ENCODE measurements at regions of chr4 and their contacts with region 1.

Region 1: DNA sequence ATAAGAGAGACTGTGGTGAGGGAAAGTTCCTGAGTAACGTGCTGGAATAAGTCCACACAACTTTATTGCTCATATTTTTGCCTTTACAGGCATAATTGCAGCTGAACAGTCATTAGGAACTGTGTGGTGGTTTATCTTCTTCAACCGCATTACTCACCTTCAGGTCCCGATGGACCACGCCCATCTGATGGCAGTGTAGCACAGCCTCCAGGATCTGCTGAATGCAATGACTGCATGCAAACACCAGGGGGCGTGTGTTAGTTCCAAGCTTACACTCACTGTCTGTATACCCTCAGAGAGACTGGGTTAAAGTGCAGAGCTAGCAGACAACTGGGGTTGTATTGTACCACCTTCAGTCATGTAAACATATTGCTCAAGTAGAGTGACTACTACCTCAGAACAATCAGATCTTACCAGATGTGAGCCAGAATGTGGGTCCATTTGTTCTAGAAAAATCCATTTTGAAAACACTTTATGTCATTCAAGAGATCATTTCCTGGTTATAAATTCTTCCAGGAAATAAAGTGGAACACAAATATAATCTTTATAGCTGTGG is 214.0 kb downstream of the CAMK2D start:
- DNase-seq: peak; percentile 97
- ATAC-seq: peak; percentile 98
- H3K4me3 ChIP-seq: no peak overlapping the region
- H3K27ac ChIP-seq: peak overlapping the region; percentile 18; the same call in 1 of the 2 replicates
- H3K4me1 ChIP-seq: peaks cover 9% of the 10 kb centered on the region
- H3K27me3 ChIP-seq: no peaks in the 10 kb centered on the region
- CTCF ChIP-seq: peak; percentile 96 to 99 (median 98); a peak in 5 of 6 replicates
- EP300 ChIP-seq: peak in 1 of 2 experiments; percentile 94; a peak in 2 of 4 replicates
- POLR2A ChIP-seq: no peak
- RAD21 ChIP-seq: peak; percentile 91

Region 2: GRCh38 chr4:113394730-113395530 is 152.6 kb before region 1 on chr4:
- CTCF ChIA-PET with region 1: no interaction called
- POLR2A ChIA-PET with region 1: no interaction called
- RAD21 ChIA-PET with region 1: no interaction called
- SMC1A ChIA-PET with region 1: interaction called, 6 read pairs
- in situ Hi-C with region 1: no loop called
- intact Hi-C with region 1: loop called (anchors 2 kb)
- DNase-seq: peak; percentile 66
- ATAC-seq: peak; percentile 99
- H3K4me3 ChIP-seq: no peak overlapping the region
- H3K27ac ChIP-seq: no peak overlapping the region
- H3K4me1 ChIP-seq: no peaks in the 10 kb centered on the region
- H3K27me3 ChIP-seq: no peaks in the 10 kb centered on the region
- CTCF ChIP-seq: peak; percentile 62 to 94 (median 70); a peak in 5 of 6 replicates
- EP300 ChIP-seq: no peak
- POLR2A ChIP-seq: no peak
- RAD21 ChIP-seq: peak; percentile 98

Region 3: DNA sequence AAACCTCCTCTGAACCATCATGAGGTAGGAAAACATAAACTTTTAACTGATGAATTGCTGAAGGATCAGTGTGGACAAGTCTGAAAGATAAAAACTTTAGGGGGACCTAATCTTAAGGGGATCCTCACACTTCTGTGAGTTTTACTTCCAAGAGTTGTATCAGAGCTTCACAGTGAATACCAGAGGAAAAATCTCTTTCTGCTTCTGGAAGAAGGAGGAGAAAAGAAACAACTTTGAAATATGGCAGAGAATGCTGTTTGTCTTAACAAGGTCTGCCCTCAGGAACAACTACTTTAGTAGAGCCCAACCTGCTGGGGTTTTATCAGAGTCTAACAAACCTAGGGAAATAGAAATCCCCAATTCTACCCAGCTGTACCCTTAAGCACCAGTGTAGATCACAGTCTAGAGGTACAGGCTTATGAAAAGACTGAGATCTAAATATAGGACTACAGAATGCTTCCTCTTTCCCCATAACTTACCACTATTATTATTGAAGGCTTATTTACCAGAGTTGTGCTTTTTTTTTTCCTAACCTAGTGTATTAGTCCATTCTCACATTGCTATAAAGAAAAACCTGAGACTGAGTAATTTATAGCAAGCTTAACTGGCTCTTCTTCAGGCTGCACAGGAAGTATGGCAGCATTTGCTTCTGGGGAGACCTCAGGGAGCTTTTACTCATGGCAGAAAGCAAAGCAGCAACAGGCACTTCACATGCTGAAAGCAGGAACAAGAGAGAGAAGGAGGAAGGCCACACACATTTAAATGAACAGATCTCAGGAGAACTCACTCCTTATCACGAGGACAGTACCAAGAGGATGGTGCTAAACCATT is 46.0 kb after region 1 on chr4:
- CTCF ChIA-PET with region 1: interaction called, 9 read pairs
- POLR2A ChIA-PET with region 1: no interaction called
- RAD21 ChIA-PET with region 1: interaction called, 3 read pairs
- SMC1A ChIA-PET with region 1: interaction called, 17 read pairs
- in situ Hi-C with region 1: no loop called
- intact Hi-C with region 1: no loop called
- DNase-seq: peak; percentile 8
- ATAC-seq: peak; percentile 84
- H3K4me3 ChIP-seq: no peak overlapping the region
- H3K27ac ChIP-seq: no peak overlapping the region; the same call in 1 of the 2 replicates
- H3K4me1 ChIP-seq: peaks cover 10% of the 10 kb centered on the region; the same call in 1 of the 2 replicates
- H3K27me3 ChIP-seq: no peaks in the 10 kb centered on the region
- CTCF ChIP-seq: no peak
- EP300 ChIP-seq: no peak
- POLR2A ChIP-seq: no peak
- RAD21 ChIP-seq: no peak

Region 4: DNA sequence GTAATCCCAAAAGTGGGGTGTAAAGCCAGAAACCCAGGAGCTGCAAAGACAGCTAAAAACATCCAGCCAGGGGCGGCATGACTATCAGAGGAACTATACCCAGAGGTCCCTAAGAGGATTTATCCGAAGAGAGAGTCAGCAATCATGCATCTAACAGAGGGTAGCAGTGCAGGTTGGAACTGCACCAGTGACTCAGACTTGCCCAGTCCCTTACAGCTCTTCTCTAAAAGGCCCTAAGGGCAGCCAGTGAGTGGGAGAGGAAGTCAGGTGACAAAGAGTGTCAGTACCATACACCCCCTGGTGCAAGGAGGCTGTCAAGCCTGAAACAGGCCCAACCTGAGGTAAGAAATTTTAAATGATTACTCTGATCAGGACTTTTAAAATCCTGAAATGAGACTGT is 125.9 kb after region 1 on chr4:
- CTCF ChIA-PET with region 1: interaction called, 13 read pairs
- POLR2A ChIA-PET with region 1: no interaction called
- RAD21 ChIA-PET with region 1: interaction called, 10 read pairs
- SMC1A ChIA-PET with region 1: interaction called, 17 read pairs
- in situ Hi-C with region 1: no loop called
- intact Hi-C with region 1: no loop called
- DNase-seq: no peak
- ATAC-seq: peak; percentile 98
- H3K4me3 ChIP-seq: no peak overlapping the region
- H3K27ac ChIP-seq: no peak overlapping the region
- H3K4me1 ChIP-seq: no peaks in the 10 kb centered on the region
- H3K27me3 ChIP-seq: no peaks in the 10 kb centered on the region
- CTCF ChIP-seq: peak in 2 of 3 experiments; percentile 6 to 15; a peak in 2 of 6 replicates
- EP300 ChIP-seq: no peak
- POLR2A ChIP-seq: no peak
- RAD21 ChIP-seq: 0 out of 2 replicates have a peak, but pooled peaks have one; percentile 24

Region 5: DNA sequence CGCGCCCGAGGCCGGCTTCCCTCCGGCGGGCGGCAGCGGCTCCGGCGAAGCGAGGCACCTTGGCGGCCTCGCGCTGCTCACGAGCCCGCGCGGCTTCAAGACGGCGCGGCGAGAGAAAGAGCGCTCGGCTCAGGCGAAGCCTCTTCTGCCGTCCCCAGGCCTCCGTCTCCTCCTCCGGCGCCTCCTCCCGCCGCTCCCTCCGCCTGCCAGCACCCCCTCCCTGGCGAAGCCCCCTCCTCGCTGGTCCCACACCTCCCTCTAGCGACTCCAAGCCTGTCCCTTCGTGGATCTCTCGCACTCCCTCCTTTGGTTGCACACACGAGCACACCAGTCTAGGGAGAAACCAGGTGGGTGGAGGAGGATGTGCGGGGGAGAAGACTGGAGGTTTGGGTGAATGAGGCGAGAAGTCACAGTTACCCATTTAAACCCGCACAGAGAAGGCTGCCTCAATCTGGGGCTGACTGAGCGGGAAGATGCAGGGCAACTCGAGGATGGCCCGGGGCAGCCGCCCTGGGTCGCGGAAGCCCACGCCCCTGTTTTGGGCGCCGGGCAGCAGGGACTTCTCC is 214.1 kb after region 1 on chr4 and contains the start of gene CAMK2D:
- CTCF ChIA-PET with region 1: interaction called, 26 read pairs
- POLR2A ChIA-PET with region 1: no interaction called
- RAD21 ChIA-PET with region 1: interaction called, 54 read pairs
- SMC1A ChIA-PET with region 1: interaction called, 60 read pairs
- in situ Hi-C with region 1: no loop called
- intact Hi-C with region 1: loop called (anchors 1 kb)
- DNase-seq: peak; percentile 81
- ATAC-seq: peak; percentile 56
- H3K4me3 ChIP-seq: peak within 1 kb of the TSS; percentile 99
- H3K27ac ChIP-seq: peak within 1 kb of the TSS; percentile 98
- H3K4me1 ChIP-seq: no peaks in the 10 kb centered on the region
- H3K27me3 ChIP-seq: no peaks in the 10 kb centered on the region
- CTCF ChIP-seq: peak; percentile 60 to 95 (median 69)
- EP300 ChIP-seq: peak in 1 of 2 experiments; percentile 33; a peak in 2 of 4 replicates
- POLR2A ChIP-seq: no peak
- RAD21 ChIP-seq: peak; percentile 89
- polyA plus RNA-seq, gene CAMK2D: 6.9 to 10.2 TPM

Region 6: GRCh38 chr4:113908829-113909228 is 361.3 kb after region 1 on chr4:
- CTCF ChIA-PET with region 1: interaction called, 3 read pairs
- POLR2A ChIA-PET with region 1: no interaction called
- RAD21 ChIA-PET with region 1: no interaction called
- SMC1A ChIA-PET with region 1: no interaction called
- in situ Hi-C with region 1: no loop called
- intact Hi-C with region 1: loop called (anchors 5 kb)
- DNase-seq: no peak
- ATAC-seq: peak; percentile 52; the same call in 1 of the 3 replicates
- H3K4me3 ChIP-seq: no peak overlapping the region
- H3K27ac ChIP-seq: no peak overlapping the region
- H3K4me1 ChIP-seq: no peaks in the 10 kb centered on the region
- H3K27me3 ChIP-seq: no peaks in the 10 kb centered on the region
- CTCF ChIP-seq: peak in 1 of 3 experiments; percentile 24; a peak in 2 of 6 replicates
- EP300 ChIP-seq: no peak
- POLR2A ChIP-seq: no peak
- RAD21 ChIP-seq: peak; percentile 77